Lower leg skin (tissue), 4 donors: ENCODE measurements at regions of chr5 and their contacts with region 1.

Region 1: DNA sequence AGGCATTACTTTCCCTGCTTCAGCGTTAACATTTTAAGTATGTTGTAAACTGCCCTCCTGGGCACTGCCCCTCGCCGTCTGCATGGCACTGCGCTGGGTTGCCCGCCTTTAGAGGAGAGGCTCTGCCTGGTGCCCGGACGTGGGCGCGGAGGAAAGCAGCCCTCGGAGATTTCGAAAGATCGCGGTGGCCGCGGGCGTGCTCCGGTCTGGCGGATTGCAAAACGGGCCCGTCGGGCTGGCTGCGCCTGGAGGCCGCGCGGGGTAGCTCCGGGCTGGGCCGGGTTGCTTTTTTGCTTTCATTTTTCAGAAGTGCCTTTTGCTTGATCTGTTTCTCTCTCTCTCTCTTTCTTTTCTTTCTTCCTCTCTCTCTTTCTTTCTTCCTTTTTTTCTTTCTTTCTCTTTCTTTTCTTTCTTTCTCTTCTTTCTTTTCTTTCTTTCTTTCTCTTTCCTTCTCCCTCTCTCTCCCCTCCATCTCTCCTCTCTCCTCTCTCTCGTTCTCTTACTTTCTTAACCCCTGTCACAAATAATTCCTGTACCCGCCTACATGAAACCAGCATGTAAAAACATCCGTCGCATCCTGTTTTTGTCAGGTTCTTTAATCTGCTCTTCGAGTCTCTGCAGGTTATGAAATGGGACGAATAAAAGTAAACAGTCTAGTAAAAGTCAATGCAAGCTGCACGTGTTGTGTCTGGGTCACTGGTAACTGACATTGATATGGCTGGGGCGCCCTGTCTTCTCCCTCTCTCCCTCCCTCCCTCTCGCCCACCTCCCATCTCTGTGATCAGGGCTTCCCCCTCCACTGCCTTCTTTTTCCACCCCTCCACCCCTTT is 1.7 kb downstream of the FST start:
- DNase-seq: peak; percentile 74 to 96
- H3K4me3 ChIP-seq: peak overlapping the region; percentile 31
- CTCF ChIP-seq: no peak
- POLR2A ChIP-seq: no peak

Region 2: DNA sequence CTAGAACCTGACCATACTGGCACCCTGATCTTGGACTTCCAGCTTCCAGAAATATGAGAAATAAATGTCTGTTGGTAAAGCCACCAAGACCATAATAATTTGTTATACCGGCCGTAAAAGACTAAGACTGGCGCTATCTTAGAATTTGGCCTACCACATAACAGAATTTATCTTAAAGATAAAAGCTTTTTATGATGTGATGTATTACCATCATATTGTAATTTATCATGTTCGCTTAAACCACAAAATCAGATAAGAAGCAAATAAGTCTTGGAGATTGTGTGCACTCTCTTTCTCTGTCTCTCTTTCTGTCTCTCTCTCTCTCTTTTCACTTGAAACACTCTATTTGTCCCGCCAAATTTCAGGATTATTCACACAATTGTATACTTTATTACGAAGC is 33.9 kb after region 1 on chr5:
- intact Hi-C with region 1: no loop called
- DNase-seq: no peak
- H3K4me3 ChIP-seq: no peak overlapping the region
- CTCF ChIP-seq: no peak
- POLR2A ChIP-seq: no peak

Region 3: DNA sequence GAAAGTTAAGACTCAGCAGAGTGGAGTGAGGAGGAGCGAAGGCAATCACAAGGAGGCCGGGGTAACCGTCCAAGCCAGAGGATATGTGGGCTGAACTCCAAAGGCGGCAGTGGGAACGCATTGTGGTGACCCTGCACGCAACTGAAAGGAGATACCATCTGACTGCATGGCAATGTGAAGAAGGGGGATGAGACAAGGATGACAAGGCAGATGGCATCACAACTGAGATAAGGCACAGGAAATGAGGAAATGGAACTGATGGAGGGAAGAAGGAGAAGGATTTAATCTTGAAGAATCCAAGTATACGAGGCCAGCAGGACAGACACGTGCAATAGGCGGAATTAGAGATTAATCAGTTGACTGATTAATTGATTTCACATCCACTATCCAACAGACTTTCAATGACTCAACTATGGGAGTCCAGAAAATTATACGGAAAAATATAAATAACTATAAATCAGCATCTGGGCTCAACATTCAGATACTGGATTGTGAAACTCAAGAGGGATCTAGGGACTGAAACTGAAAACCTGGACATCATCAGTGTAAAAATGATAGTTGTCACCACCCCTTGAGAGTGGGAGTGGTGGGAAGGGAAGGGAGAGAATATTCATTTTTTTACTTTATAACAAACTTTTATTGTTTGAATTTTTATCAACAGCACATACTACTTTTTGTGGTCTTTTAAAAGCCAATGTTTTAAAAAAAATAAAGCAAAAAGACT is 742.2 kb after region 1 on chr5:
- intact Hi-C with region 1: loop called (anchors 5 kb)
- DNase-seq: no peak
- H3K4me3 ChIP-seq: no peak overlapping the region
- CTCF ChIP-seq: no peak
- POLR2A ChIP-seq: no peak